Adrenal gland (tissue), 19 donors: ENCODE measurements at regions of chr2 and their contacts with region 1.

Region 1: GRCh38 chr2:42169874-42170521 is 845 bp downstream of the EML4 start:
- DNase-seq: no peak
- H3K4me3 ChIP-seq: peak overlapping the region; percentile 6 to 98 (median 75)
- H3K27ac ChIP-seq: peak overlapping the region; percentile 55 to 99 (median 90)
- H3K4me1 ChIP-seq: peaks cover 25 to 29% of the 10 kb centered on the region in 2 donors
- H3K27me3 ChIP-seq: no peaks in the 10 kb centered on the region
- CTCF ChIP-seq: no peak
- POLR2A ChIP-seq: no peak

Region 2: GRCh38 chr2:42102024-42102590 is 67.9 kb before region 1 on chr2:
- intact Hi-C with region 1: loop called in 1 of 2 experiments (anchors 10 kb)
- DNase-seq: peak; percentile 51 to 77 (median 59)
- H3K4me3 ChIP-seq: peak overlapping the region in 1 of 4 donors; percentile 54
- H3K27ac ChIP-seq: peak overlapping the region in 4 of 5 donors; percentile 59 to 90 (median 76)
- H3K4me1 ChIP-seq: peaks cover 19 to 38% of the 10 kb centered on the region in 2 donors
- H3K27me3 ChIP-seq: no peaks in the 10 kb centered on the region
- CTCF ChIP-seq: no peak
- POLR2A ChIP-seq: no peak